ENCODE measurements at regions of chr10 and their contacts with region 1.

Region 1: DNA sequence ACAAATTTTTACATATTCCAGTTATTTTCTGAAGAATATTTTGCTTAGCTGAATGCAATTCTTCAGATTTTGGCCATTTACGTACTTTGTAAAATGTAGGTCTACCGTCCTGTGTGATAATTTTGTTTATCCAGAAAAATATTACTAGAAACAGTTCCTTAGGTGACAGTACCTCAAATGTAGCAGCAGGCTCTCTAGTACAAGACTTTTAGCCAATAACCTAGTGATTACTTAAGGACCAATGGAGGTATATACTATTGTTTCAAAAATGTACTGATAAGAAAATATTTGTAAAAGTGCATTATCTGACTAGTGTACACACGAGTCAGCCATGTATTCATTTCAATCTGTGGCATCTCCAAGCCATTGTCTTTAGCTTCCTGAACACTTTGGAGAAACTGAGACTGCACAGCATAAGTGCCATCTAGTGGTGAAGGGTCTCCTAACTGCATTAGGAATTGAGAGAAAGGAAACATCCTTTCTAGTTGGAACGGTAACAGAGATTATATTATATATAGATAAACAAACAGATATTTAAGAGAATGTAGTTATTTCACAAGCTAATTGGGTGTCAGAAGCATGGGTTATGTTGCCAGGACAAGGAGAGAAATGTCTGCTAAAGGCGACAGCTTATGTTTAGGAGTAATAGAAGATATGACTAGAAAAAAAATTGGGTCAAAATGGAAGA is 23.7 kb downstream of the RTKN2 start:
- DNase-seq: peak in 1 of 2 donors; percentile 70
- H3K4me3 ChIP-seq: no peak overlapping the region
- H3K27ac ChIP-seq: no peak overlapping the region
- H3K4me1 ChIP-seq: peaks cover 0 to 8% of the 10 kb centered on the region in 2 donors
- H3K27me3 ChIP-seq: no peaks in the 10 kb centered on the region
- CTCF ChIP-seq: peak; percentile 69 to 83 (median 77)

Region 2: DNA sequence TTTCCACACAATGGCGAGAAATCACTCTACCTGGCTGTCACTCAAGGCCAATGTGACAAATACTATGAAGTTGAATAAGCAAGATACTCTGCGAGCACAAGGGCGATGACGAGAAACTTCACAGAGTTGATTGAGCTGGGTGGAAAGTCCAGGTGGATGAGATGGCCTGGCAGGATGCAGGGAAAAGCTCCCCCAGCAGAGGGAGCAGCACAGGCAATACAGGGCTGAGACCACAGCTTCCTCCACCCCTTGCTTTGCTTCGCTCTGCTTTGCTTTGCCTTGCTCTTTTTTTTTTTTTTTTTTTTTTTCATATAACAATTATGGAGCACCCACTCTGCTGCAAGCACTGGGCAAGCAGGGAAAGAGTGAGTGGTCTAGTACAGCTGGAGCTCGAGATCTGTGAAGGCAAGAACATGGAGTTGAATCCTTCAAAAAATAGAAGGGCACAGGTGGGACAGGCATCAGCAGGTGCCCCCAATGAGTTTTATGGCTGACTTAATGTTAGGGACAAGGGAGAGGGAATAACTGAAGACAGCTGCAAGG is 493.9 kb before region 1 on chr10:
- intact Hi-C with region 1: loop called (anchors 10 kb)
- DNase-seq: peak in 1 of 2 donors; percentile 69
- H3K4me3 ChIP-seq: no peak overlapping the region
- H3K27ac ChIP-seq: peak overlapping the region; percentile 49 to 65
- H3K4me1 ChIP-seq: peaks cover 0 to 26% of the 10 kb centered on the region in 2 donors
- H3K27me3 ChIP-seq: no peaks in the 10 kb centered on the region
- CTCF ChIP-seq: peak in 2 of 3 experiments; percentile 42

Region 3: DNA sequence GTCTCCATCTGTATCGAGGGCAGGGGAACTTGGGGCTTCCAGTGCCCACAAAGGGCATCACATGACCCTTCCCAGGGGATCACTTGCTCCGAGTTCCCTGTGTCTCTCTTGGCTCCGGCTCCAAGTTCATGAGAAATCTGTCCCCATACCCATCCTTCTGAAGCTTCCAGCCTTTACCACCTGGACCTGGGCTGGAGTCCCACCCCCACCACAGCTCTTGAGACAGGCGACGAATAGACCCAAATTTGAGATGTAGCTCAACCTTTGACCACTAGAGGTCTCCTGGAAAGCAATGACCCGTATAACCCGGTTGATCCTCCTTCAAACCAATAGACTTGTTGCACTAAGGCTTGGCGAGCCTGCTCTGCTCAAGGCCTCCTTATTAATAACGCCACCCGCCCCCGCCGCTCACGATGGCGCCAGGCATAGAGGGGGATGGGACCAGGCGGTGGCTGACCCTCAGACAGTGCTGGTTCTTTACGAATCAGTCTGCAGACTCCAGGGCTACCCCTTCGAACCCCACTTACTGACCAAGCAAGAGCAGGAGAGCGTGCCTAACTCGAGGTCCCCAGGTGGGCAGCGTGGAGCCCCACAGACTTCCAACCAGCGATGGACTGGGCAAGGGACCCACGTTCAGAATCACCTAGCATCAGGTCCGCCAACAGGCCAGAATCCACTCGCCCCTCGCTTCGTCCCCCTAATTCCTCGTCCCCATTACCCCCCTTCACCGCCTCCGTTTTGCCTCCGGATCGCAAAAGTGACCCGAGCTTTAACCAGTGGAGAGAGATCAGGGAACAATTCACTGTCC is 347.9 kb before region 1 on chr10:
- intact Hi-C with region 1: loop called (anchors 2 kb)
- DNase-seq: peak in 1 of 2 donors; percentile 82
- H3K4me3 ChIP-seq: peak overlapping the region; percentile 49 to 57
- H3K27ac ChIP-seq: peak overlapping the region; percentile 32 to 56
- H3K4me1 ChIP-seq: peaks cover 0 to 20% of the 10 kb centered on the region in 2 donors
- H3K27me3 ChIP-seq: no peaks in the 10 kb centered on the region
- CTCF ChIP-seq: peak; percentile 61 to 66 (median 64)

Region 4: DNA sequence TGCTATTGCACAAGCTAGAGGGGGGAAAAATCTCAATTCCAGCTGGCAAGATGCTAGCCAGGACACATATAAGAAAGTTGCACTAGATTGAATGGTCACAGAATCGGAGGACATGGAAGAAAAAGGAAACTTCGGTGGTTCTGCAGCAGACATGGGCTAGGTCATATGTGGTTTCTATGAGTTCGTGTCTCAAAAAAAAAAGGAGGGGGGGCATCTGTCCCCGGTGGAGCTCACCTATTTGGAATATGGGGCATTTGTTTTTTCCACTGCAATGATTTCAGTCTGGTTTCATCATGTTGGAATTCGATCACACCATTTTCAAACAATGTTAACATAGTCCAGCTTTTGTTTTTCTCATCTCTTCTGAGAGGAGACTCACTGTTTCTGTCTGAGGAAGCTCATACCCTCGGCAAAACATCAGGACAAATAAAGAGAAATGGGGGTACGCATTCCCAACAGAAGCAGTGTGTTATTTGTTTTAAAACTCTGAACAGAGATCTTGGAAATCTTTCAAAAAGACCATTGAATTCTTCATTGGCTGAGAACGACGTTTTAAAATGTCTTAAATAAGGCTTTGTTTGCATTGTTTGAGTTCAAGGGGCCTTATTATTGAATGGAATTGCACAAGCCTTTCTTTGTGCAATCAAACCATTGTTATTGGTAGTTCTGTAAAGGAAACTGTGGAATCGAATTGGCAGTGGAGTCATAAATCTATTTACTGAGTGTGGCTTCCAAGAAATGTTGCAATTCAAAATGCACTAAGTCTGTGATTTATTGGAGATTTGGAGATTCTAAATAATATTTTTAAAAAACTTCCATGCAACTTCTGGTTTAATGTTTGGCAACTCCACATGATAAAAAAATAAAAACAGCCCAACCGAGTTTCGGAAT is 149.5 kb before region 1 on chr10:
- intact Hi-C with region 1: loop called (anchors 5 kb)
- DNase-seq: no peak
- H3K4me3 ChIP-seq: no peak overlapping the region
- H3K27ac ChIP-seq: peak overlapping the region in 1 of 2 donors; percentile 27
- H3K4me1 ChIP-seq: peaks cover 4 to 19% of the 10 kb centered on the region in 2 donors
- H3K27me3 ChIP-seq: no peaks in the 10 kb centered on the region
- CTCF ChIP-seq: no peak

Measured in ascending aorta (tissue), 2 donors.